Activated naive CD4-positive, alpha-beta T cell treated with anti-CD3 and anti-CD28 coated beads for 36 hours (primary cell): ENCODE measurements at regions of chr14 and their contacts with region 1.

Region 1: DNA sequence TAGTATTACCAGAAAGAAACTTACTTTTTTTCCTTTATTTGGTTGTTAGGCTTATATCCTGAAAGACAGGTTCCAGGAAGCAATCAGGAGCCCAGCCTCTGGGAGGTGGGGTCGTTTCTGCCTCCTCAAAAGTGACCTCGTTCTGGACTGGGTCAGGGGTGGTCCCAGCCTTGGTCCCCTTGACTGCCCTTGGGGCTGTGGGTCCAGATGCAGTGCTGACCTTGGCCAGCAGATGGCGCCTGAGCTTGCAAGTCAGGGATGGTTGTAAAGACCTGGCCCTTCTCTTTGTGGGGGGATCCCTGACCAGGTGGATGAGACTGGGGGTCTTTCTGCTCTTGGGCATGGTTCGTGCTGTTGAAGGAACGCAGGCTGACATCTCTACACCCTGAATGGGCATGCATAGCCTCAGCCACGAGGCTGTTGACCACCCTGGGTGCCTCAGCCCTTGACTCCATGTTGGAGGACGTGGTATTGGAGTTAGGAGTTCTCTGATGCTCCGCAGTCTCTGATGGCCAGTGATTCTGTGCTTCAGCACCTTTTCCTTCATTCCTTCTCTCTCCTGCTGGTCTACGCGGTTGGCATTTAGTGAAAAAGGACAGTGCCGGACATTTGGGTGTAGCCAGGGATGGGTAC is 62.4 kb downstream of the ADCK1 start:
- DNase-seq: peak; percentile 87
- H3K4me3 Mint-ChIP-seq: no peak overlapping the region
- H3K27ac Mint-ChIP-seq: no peak overlapping the region
- H3K4me1 Mint-ChIP-seq: no peaks in the 10 kb centered on the region
- H3K27me3 Mint-ChIP-seq: no peaks in the 10 kb centered on the region

Region 2: DNA sequence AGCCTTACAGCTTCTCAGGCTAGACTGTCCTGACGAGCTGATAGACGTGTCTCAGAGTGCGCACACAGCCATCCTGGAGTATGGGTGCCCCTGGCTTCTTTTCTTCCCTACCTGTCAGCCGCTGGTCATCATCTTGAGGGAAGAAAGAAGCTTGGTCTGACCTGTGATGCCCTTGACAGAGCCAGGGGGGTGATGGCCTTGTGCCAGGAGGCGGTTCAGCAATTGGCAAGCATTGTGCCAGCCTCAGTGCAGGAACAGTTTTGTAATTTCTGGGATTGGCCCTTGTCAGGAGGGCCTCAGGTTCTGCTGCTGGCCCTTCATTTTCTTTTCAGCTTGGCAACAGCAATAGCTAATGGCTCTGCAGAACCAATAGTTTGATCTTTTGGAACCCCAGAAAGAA is 17.8 kb after region 1 on chr14:
- CTCF ChIA-PET with region 1: interaction called, 11 read pairs
- intact Hi-C with region 1: no loop called
- DNase-seq: no peak
- H3K4me3 Mint-ChIP-seq: no peak overlapping the region
- H3K27ac Mint-ChIP-seq: no peak overlapping the region
- H3K4me1 Mint-ChIP-seq: no peaks in the 10 kb centered on the region
- H3K27me3 Mint-ChIP-seq: no peaks in the 10 kb centered on the region

Region 3: GRCh38 chr14:78448164-78449094 is 586.2 kb after region 1 on chr14:
- CTCF ChIA-PET with region 1: no interaction called
- intact Hi-C with region 1: loop called (anchors 5 kb)
- DNase-seq: peak; percentile 68
- H3K4me3 Mint-ChIP-seq: no peak overlapping the region
- H3K27ac Mint-ChIP-seq: no peak overlapping the region
- H3K4me1 Mint-ChIP-seq: no peaks in the 10 kb centered on the region
- H3K27me3 Mint-ChIP-seq: no peaks in the 10 kb centered on the region

Region 4: DNA sequence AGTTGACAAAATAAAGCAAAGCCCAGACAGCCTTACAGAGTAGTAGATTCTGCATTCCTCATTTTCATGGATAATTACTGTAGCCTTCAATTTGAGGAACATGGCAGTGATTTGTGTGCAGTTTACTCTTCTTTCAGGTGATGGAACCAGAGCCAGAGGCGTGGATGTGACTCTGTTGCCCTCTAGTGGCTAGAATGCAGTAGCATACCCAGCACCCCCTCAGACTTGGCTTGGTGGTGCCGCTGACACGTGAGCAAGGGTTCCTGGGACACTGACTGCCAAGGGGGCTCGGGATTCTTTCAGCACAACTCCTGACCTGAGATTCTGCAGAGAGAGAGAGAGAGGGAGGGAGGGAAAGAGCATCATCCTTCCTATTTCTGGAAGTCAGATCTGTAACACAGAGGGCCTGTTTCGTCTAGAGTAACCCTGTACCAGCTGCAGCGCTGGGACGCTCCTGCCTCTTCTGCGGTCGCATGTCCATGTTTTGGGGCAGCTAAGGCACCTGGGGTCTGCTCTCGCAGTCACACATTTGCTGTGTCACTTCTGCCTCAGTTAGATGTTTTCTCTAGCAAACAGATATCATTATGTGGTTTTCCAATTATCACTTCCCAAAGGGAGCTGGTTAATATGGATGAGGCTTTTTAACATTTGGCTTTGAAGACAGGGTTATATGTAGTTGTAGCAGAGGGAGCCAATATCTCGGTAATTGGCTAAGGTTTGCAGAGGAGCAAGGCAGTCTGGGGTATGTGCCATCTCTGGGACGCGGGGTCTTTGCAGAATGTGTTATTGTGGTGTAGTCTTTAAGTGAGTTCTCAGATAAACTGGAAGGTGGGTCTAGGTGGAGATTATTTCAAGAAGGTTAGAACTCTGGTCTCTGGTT is 736.0 kb after region 1 on chr14:
- CTCF ChIA-PET with region 1: interaction called, 12 read pairs
- intact Hi-C with region 1: loop called (anchors 1 kb)
- DNase-seq: peak; percentile 69
- H3K4me3 Mint-ChIP-seq: no peak overlapping the region
- H3K27ac Mint-ChIP-seq: no peak overlapping the region
- H3K4me1 Mint-ChIP-seq: no peaks in the 10 kb centered on the region
- H3K27me3 Mint-ChIP-seq: peaks cover 20% of the 10 kb centered on the region

Region 5: GRCh38 chr14:78836777-78837176 is 974.5 kb after region 1 on chr14:
- CTCF ChIA-PET with region 1: no interaction called
- intact Hi-C with region 1: loop called (anchors 10 kb)
- DNase-seq: peak; percentile 45
- H3K4me3 Mint-ChIP-seq: no peak overlapping the region
- H3K27ac Mint-ChIP-seq: no peak overlapping the region
- H3K4me1 Mint-ChIP-seq: no peaks in the 10 kb centered on the region
- H3K27me3 Mint-ChIP-seq: no peaks in the 10 kb centered on the region